ENCODE measurements at regions of chr18 and their contacts with region 1.

Region 1: DNA sequence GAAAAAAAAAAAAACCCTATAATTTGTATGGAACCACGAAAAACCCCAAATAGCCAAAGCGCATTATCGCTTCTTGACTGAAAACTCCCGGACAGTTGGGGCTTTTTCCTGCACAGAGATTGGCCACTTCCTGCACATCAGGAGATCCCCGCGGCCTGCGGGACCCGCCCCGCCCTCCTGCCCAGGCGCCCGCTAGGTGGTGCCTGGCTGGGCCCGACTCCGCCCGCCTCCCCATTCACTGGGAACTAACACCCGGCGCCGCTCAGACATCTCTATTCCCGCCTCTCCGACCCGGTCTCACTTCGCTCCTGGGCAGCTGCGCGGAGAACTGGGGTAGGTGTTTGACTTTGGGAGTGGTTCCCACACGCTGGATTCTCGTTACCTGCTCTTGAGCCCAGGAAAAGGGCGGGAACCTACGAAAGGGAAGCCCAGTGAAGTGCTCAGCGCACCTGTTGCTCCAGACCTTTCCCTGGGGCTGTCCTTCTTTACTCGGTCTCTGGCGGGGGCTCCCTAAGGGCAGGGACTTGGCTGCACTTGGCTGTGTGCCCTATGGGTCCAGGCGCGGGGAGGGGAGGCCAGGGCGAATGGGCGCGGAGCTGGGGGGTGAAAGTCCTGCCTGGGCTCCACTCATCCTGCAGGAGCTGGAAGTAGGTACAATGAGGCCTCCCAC is at the start of gene HMSD:
- DNase-seq: peak; percentile 89
- H3K4me3 Mint-ChIP-seq: peak within 1 kb of the TSS; percentile 82
- H3K27ac Mint-ChIP-seq: peak within 1 kb of the TSS; percentile 86
- H3K4me1 Mint-ChIP-seq: peaks cover 43% of the 10 kb centered on the region
- H3K27me3 Mint-ChIP-seq: peaks cover 26% of the 10 kb centered on the region
- total RNA-seq, gene HMSD: 25.0 to 31.7 TPM

Region 2: DNA sequence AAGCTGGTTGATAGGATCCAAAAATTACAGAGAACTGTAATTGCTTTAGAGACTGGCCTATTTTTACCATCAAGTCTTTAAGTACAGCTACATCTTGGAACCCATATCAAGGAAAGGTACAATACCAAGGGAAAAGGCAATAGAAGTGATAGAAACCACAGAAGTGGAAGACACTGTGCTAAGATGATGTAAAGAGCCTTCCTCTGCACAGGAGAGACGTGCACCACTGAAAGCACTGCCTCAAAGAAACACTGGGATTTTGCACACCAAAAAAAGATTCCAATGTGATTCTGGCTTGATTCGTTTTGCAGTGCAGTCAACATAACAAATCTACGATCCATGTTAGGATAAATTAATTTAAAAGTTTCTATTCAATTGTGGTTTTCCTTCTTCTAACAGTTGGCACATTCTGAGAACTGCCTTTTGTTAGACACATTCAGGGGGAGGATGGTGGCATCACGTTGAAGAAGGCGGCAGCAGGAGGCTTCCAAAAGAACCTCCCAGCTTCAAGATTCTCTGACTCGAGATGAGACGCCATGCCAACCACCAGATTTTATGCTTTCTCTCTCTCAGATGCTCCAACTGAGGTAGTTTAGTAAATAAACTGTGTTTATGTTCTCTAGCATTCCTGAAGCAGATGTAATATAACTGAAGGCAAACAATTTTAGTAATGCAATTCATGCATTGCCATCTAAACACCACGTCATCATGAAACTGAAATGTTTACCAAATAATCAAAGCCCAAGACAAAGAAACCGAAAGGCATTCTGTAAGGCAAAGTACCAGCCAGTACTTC is 732.5 kb before region 1 on chr18:
- CTCF ChIA-PET with region 1: no interaction called
- intact Hi-C with region 1: loop called (anchors 2 kb)
- DNase-seq: peak; percentile 48
- H3K4me3 Mint-ChIP-seq: peak overlapping the region; percentile 64
- H3K27ac Mint-ChIP-seq: peak overlapping the region; percentile 94
- H3K4me1 Mint-ChIP-seq: peaks cover 89% of the 10 kb centered on the region
- H3K27me3 Mint-ChIP-seq: no peaks in the 10 kb centered on the region

Region 3: DNA sequence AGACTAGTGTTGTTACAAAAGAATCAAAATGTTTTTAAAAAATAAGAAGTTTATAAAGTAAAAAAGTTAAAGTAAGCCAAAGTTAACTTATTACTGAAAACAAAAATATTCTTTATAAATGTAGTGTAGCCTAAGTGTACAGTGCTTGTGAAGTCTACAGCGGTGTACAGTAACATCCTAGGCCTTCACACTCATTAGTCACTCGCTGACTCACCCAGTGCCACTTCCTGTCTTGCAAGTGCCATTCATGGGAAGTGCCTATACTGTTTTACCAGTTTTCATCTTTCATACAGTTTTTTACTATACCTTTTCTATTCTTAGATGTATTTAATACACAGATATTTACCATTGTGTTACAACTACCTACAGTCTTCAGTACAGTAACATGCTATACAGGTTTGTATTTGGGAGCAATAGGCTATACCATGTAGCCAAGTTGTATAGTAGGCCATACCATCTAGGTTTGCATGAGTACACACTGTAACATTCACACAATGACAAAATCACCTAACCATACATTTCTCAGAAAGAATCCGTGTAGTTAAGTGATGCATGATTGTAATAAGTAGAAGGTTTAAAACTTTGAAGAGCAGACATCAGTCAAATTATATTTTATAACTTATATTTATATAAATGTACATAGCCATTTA is 160.6 kb before region 1 on chr18:
- CTCF ChIA-PET with region 1: no interaction called
- intact Hi-C with region 1: loop called (anchors 1 kb)
- DNase-seq: peak; percentile 81
- H3K4me3 Mint-ChIP-seq: no peak overlapping the region
- H3K27ac Mint-ChIP-seq: no peak overlapping the region
- H3K4me1 Mint-ChIP-seq: peaks cover 6% of the 10 kb centered on the region
- H3K27me3 Mint-ChIP-seq: no peaks in the 10 kb centered on the region

Region 4: GRCh38 chr18:63936156-63936931 is 12.9 kb before region 1 on chr18:
- CTCF ChIA-PET with region 1: interaction called, 3 read pairs
- intact Hi-C with region 1: loop called (anchors 1 kb)
- DNase-seq: peak; percentile 77
- H3K4me3 Mint-ChIP-seq: no peak overlapping the region
- H3K27ac Mint-ChIP-seq: no peak overlapping the region
- H3K4me1 Mint-ChIP-seq: peaks cover 2% of the 10 kb centered on the region
- H3K27me3 Mint-ChIP-seq: peaks cover 13% of the 10 kb centered on the region

Region 5: GRCh38 chr18:63969960-63970802 is 21.0 kb after region 1 on chr18 and contains the start of gene SERPINB8:
- CTCF ChIA-PET with region 1: interaction called, 31 read pairs
- intact Hi-C with region 1: loop called (anchors 1 kb)
- DNase-seq: peak; percentile 91
- H3K4me3 Mint-ChIP-seq: peak within 1 kb of the TSS; percentile 93
- H3K27ac Mint-ChIP-seq: peak within 1 kb of the TSS; percentile 97
- H3K4me1 Mint-ChIP-seq: peaks cover 35% of the 10 kb centered on the region
- H3K27me3 Mint-ChIP-seq: no peaks in the 10 kb centered on the region
- total RNA-seq, gene SERPINB8: 10.5 to 11.7 TPM

Measured in activated naive CD4-positive, alpha-beta T cell treated with anti-CD3 and anti-CD28 coated beads for 36 hours (primary cell).